ENCODE measurements at regions of chr16 and their contacts with region 1.

Region 1: DNA sequence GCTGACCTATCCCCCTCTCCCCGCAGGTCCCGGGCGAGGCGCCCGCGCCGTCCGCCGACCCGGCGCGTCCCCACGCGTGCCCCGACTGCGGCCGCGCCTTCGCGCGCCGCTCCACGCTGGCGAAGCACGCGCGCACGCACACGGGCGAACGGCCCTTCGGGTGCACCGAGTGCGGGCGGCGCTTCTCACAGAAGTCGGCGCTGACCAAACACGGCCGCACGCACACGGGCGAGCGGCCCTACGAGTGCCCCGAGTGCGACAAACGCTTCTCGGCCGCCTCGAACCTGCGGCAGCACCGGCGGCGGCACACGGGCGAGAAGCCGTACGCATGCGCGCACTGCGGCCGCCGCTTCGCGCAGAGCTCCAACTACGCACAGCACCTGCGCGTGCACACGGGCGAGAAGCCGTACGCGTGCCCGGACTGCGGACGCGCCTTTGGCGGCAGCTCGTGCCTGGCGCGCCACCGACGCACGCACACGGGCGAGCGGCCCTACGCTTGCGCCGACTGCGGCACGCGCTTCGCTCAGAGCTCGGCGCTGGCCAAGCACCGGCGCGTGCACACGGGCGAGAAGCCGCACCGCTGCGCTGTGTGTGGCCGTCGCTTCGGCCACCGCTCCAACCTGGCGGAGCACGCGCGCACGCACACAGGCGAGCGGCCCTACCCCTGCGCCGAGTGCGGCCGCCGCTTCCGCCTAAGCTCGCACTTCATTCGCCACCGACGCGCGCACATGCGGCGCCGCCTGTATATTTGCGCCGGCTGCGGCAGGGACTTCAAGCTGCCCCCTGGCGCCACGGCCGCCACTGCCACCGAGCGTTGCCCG is 10.3 kb downstream of the ZNF771 start:
- DNase-seq: peak; percentile 77 to 98 (median 88)
- ATAC-seq: peak; percentile 85
- H3K4me3 ChIP-seq: peak overlapping the region; percentile 53
- H3K4me3 Mint-ChIP-seq: peak overlapping the region; percentile 80
- H3K27ac ChIP-seq: peak overlapping the region; percentile 73
- H3K27ac Mint-ChIP-seq: peak overlapping the region; percentile 86
- H3K4me1 ChIP-seq: peaks cover 16% of the 10 kb centered on the region
- H3K4me1 Mint-ChIP-seq: peaks cover 21% of the 10 kb centered on the region
- H3K27me3 ChIP-seq: no peaks in the 10 kb centered on the region
- H3K27me3 Mint-ChIP-seq: no peaks in the 10 kb centered on the region
- CTCF ChIP-seq: no peak

Region 2: GRCh38 chr16:29995911-29996772 is 421.6 kb before region 1 on chr16 and contains the start of gene INO80E:
- CTCF ChIA-PET with region 1: no interaction called
- POLR2A ChIA-PET with region 1: no interaction called
- intact Hi-C with region 1: no loop called
- DNase-seq: peak; percentile 97 to 100 (median 99)
- ATAC-seq: peak; percentile 95
- H3K4me3 ChIP-seq: peak within 1 kb of the TSS; percentile 83
- H3K4me3 Mint-ChIP-seq: peak within 1 kb of the TSS; percentile 98
- H3K27ac ChIP-seq: peak within 1 kb of the TSS; percentile 98
- H3K27ac Mint-ChIP-seq: peak within 1 kb of the TSS; percentile 99
- H3K4me1 ChIP-seq: peaks cover 30% of the 10 kb centered on the region
- H3K4me1 Mint-ChIP-seq: peaks cover 33% of the 10 kb centered on the region
- H3K27me3 ChIP-seq: no peaks in the 10 kb centered on the region
- H3K27me3 Mint-ChIP-seq: no peaks in the 10 kb centered on the region
- CTCF ChIP-seq: no peak
- total RNA-seq, gene INO80E: 54.6 to 57.6 TPM

Region 3: GRCh38 chr16:30091474-30092372 is 326.0 kb before region 1 on chr16 and contains the start of gene TBX6:
- CTCF ChIA-PET with region 1: no interaction called
- POLR2A ChIA-PET with region 1: interaction called, 5 read pairs
- intact Hi-C with region 1: loop called in 1 of 2 experiments (anchors 10 kb)
- DNase-seq: peak; percentile 85 to 96 (median 91)
- ATAC-seq: peak; percentile 80
- H3K4me3 ChIP-seq: peak within 1 kb of the TSS; percentile 67
- H3K4me3 Mint-ChIP-seq: peak within 1 kb of the TSS; percentile 88
- H3K27ac ChIP-seq: peak within 1 kb of the TSS; percentile 58 to 81
- H3K27ac Mint-ChIP-seq: peak within 1 kb of the TSS; percentile 95
- H3K4me1 ChIP-seq: peaks cover 72% of the 10 kb centered on the region
- H3K4me1 Mint-ChIP-seq: peaks cover 53% of the 10 kb centered on the region
- H3K27me3 ChIP-seq: no peaks in the 10 kb centered on the region
- H3K27me3 Mint-ChIP-seq: no peaks in the 10 kb centered on the region
- CTCF ChIP-seq: peak; percentile 78
- total RNA-seq, gene TBX6: 0.42 to 0.47 TPM

Region 4: DNA sequence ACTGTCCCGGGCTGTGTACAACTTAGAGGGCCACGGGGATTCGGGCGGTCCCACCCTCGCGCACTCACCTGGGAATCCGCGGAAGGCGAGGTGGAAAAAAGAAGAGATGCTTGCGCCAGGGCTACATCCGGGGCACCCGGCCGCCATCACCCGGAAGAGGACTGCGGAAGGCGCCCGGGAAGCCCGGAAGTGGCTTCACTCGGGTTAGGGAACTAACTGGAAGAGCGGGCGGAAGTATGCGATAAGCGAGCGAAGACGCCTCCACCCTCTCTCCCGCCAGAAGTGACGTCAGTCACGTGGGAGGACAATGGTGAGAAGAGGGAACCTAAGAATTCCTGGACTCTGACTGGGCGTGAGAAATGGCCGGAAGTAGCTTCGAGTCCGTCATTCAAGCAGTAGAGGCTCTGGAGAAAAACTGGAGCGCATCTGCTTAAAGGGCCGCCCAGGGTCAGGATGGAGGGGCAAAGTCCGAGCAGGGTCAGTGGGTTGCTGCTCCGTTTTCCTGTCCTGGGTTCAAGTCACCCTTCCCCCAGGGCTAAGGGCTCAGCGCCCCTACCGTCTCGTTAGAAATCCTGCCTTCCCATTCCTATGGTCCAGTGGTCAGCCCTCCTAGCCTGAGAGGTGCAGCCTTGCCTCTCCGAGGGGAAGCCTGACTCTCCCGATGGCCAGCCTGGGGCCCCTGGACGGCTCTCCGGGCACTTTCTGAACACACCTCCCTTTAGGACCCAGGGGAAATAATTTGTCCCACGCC is 62.4 kb before region 1 on chr16 and contains the start of gene CD2BP2:
- CTCF ChIA-PET with region 1: no interaction called
- POLR2A ChIA-PET with region 1: interaction called, 15 read pairs
- intact Hi-C with region 1: no loop called
- DNase-seq: peak; percentile 71 to 97 (median 84)
- ATAC-seq: peak; percentile 88
- H3K4me3 ChIP-seq: peak within 1 kb of the TSS; percentile 98
- H3K4me3 Mint-ChIP-seq: peak within 1 kb of the TSS; percentile 91
- H3K27ac ChIP-seq: peak within 1 kb of the TSS; percentile 92 to 99
- H3K27ac Mint-ChIP-seq: peak within 1 kb of the TSS; percentile 89
- H3K4me1 ChIP-seq: peaks cover 35% of the 10 kb centered on the region
- H3K4me1 Mint-ChIP-seq: peaks cover 28% of the 10 kb centered on the region
- H3K27me3 ChIP-seq: no peaks in the 10 kb centered on the region
- H3K27me3 Mint-ChIP-seq: no peaks in the 10 kb centered on the region
- CTCF ChIP-seq: no peak
- total RNA-seq, gene CD2BP2: 39.1 to 41.7 TPM

Region 5: GRCh38 chr16:30407102-30407803 is 10.5 kb before region 1 on chr16 and contains the start of gene ZNF771:
- CTCF ChIA-PET with region 1: interaction called, 10 read pairs
- POLR2A ChIA-PET with region 1: interaction called, 96 read pairs
- intact Hi-C with region 1: no loop called
- DNase-seq: peak; percentile 68 to 96 (median 86)
- ATAC-seq: peak; percentile 71
- H3K4me3 ChIP-seq: peak within 1 kb of the TSS; percentile 69
- H3K4me3 Mint-ChIP-seq: peak within 1 kb of the TSS; percentile 97
- H3K27ac ChIP-seq: peak within 1 kb of the TSS; percentile 66 to 67
- H3K27ac Mint-ChIP-seq: peak within 1 kb of the TSS; percentile 79
- H3K4me1 ChIP-seq: peaks cover 31% of the 10 kb centered on the region
- H3K4me1 Mint-ChIP-seq: peaks cover 21% of the 10 kb centered on the region
- H3K27me3 ChIP-seq: no peaks in the 10 kb centered on the region
- H3K27me3 Mint-ChIP-seq: no peaks in the 10 kb centered on the region
- CTCF ChIP-seq: no peak
- total RNA-seq, gene ZNF771: 0.80 to 1.2 TPM

Region 6: DNA sequence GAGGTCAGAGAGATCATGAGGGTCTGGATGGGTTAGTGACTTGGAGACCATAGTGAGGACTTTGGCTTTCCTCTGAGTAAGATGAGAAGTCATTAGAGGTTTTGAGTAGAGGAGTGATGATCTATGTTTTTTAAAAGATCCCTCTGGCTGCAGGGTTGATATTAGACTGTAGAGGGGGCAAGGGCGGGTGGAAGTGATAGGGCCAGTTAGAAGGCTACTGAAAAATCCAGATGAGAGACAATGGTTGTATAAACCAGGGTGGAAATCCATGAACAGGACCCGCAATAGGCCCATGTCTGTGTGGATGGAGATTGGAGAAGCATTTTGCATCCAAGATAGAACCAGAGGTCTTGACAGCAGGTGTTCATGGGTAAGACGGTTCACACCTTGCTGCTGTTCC is 64.6 kb after region 1 on chr16:
- CTCF ChIA-PET with region 1: no interaction called
- POLR2A ChIA-PET with region 1: no interaction called
- intact Hi-C with region 1: no loop called
- DNase-seq: peak in 3 of 14 experiments; percentile 21 to 38 (median 23)
- ATAC-seq: peak; percentile 80
- H3K4me3 ChIP-seq: no peak overlapping the region
- H3K4me3 Mint-ChIP-seq: no peak overlapping the region
- H3K27ac ChIP-seq: no peak overlapping the region
- H3K27ac Mint-ChIP-seq: peak overlapping the region; percentile 76
- H3K4me1 ChIP-seq: peaks cover 62% of the 10 kb centered on the region
- H3K4me1 Mint-ChIP-seq: peaks cover 24% of the 10 kb centered on the region
- H3K27me3 ChIP-seq: no peaks in the 10 kb centered on the region
- H3K27me3 Mint-ChIP-seq: no peaks in the 10 kb centered on the region
- CTCF ChIP-seq: no peak

Region 7: GRCh38 chr16:30499284-30499683 is 81.5 kb after region 1 on chr16:
- CTCF ChIA-PET with region 1: no interaction called
- POLR2A ChIA-PET with region 1: interaction called, 10 read pairs
- intact Hi-C with region 1: no loop called
- DNase-seq: no peak
- ATAC-seq: no peak
- H3K4me3 ChIP-seq: no peak overlapping the region
- H3K4me3 Mint-ChIP-seq: no peak overlapping the region
- H3K27ac ChIP-seq: no peak overlapping the region
- H3K27ac Mint-ChIP-seq: no peak overlapping the region
- H3K4me1 ChIP-seq: peaks cover 10% of the 10 kb centered on the region
- H3K4me1 Mint-ChIP-seq: peaks cover 9% of the 10 kb centered on the region
- H3K27me3 ChIP-seq: no peaks in the 10 kb centered on the region
- H3K27me3 Mint-ChIP-seq: no peaks in the 10 kb centered on the region
- CTCF ChIP-seq: no peak

Region 8: DNA sequence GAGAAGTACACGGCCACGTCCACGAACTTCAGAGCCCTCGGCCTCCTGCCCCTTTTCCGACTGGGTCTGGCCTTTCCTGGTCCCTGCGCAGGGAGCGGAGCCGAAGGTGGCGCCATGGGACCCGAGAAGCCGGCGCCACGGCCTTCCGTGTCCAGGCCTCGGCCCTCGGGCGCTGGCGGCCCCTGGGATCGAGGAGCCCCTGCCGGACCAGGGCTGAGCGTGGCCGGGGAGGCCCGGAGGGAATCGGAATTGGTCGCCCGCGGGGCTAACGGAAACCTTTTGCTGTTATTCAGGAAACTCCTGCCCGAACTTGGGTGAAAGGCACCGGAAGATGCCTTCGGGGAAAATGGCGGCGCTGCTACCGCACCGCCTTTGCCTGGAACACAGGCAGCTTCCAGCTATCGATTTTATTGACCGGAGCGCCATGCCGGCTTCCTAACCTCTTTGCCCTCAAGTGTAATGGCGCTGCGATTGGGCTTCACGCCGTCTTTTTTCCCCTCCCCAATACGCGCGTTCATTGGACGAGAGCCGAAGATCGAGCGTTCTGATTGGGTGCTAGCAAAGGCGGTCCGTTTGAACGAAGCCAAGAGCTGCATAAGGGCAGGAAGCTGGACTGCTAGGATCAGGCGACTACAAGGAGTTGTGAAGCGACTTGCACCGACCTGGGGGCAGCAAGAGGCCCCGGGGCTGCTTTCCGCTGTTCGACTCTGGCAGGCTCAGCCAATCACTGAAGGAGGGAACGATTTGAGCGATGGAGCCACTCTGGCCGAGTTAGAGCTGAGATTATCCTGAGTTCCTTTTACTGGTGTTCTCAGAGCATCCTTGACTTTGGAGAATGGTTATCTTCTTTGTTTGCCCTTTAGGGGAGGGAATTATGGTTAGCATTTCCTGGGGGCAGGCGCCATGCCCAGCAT is 192.4 kb after region 1 on chr16 and contains the start of gene ZNF689:
- CTCF ChIA-PET with region 1: no interaction called
- POLR2A ChIA-PET with region 1: interaction called, 12 read pairs
- intact Hi-C with region 1: no loop called
- DNase-seq: peak; percentile 88 to 97 (median 94)
- ATAC-seq: peak; percentile 92
- H3K4me3 ChIP-seq: peak within 1 kb of the TSS; percentile 74
- H3K4me3 Mint-ChIP-seq: peak within 1 kb of the TSS; percentile 91
- H3K27ac ChIP-seq: peak within 1 kb of the TSS; percentile 86 to 89
- H3K27ac Mint-ChIP-seq: peak within 1 kb of the TSS; percentile 93
- H3K4me1 ChIP-seq: peaks cover 26% of the 10 kb centered on the region
- H3K4me1 Mint-ChIP-seq: peaks cover 23% of the 10 kb centered on the region
- H3K27me3 ChIP-seq: no peaks in the 10 kb centered on the region
- H3K27me3 Mint-ChIP-seq: no peaks in the 10 kb centered on the region
- CTCF ChIP-seq: no peak
- total RNA-seq, gene ZNF689: 15.3 to 15.7 TPM